H1 (cell line): ENCODE measurements at regions of chr12 and their contacts with region 1.

Region 1: GRCh38 chr12:56266693-56267442 is at the start of gene COQ10A:
- DNase-seq: peak; percentile 51 to 95
- H3K4me3 ChIP-seq: peak within 1 kb of the TSS; percentile 82 to 88 (median 87)
- H3K27ac ChIP-seq: peak within 1 kb of the TSS; percentile 84
- H3K4me1 ChIP-seq: peaks cover 0 to 9% (median 3%) of the 10 kb centered on the region in 4 experiments; a peak in 4 of 7 replicates
- H3K27me3 ChIP-seq: no peaks in the 10 kb centered on the region
- CTCF ChIP-seq: peak; percentile 41 to 71 (median 70)
- EP300 ChIP-seq: no peak
- POLR2A ChIP-seq: peak; percentile 51 to 85
- RAD21 ChIP-seq: peak in 1 of 2 experiments; percentile 1; a peak in 1 of 4 replicates
- total RNA-seq, gene COQ10A: 21.8 and 22.8 TPM in 2 replicates

Region 2: DNA sequence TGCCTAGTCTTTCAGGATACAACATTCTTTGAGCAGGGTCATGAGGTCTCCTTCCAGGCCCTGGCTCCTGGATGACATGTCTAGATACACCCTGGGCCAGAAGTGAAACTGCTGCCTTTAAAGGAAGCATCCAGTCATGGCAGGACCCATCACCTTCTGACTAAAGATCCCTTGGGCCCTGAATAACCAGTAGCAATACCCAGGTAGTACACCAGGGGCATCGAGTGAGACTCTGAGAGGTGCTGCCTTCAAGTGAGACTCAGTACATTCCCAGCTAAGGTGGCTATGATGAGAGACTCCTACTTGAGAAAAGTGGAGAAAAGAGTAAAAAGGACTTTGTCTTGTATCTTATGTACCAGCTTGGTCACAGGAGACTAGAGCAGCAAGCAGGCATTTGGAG is 751.2 kb before region 1 on chr12:
- CTCF ChIA-PET with region 1: no interaction called
- POLR2A ChIA-PET with region 1: no interaction called
- DNase-seq: no peak
- H3K4me3 ChIP-seq: no peak overlapping the region
- H3K27ac ChIP-seq: no peak overlapping the region
- H3K4me1 ChIP-seq: no peaks in the 10 kb centered on the region
- H3K27me3 ChIP-seq: no peaks in the 10 kb centered on the region
- CTCF ChIP-seq: peak in 2 of 3 experiments; percentile 18 to 39; a peak in 2 of 4 replicates
- EP300 ChIP-seq: no peak
- POLR2A ChIP-seq: no peak
- RAD21 ChIP-seq: peak in 1 of 2 experiments; percentile 25; a peak in 3 of 4 replicates

Region 3: DNA sequence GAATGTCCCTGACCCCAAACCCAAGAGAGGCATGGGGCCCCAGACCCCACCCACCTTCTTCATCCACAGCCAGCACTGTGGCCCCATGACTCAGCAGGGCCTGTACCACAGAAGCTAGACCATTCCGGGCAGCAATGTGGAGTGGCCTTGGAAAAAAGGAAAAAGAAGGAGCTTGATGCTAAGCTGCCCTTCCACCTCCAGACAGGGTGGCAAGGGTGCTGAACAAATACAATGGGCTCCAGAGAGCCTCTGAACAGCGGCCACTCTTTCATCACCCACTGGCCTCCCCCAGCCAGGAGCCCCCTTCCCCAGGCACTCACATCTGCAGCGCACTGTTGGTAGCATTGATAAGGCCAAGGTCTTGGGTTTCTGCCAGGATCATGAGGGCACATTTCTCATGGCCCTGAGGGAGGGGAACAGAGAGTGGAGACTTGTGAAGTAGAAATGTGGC is 23.1 kb before region 1 on chr12:
- CTCF ChIA-PET with region 1: interaction called, 5 read pairs
- POLR2A ChIA-PET with region 1: interaction called, 10 read pairs
- DNase-seq: no peak
- H3K4me3 ChIP-seq: no peak overlapping the region
- H3K27ac ChIP-seq: no peak overlapping the region
- H3K4me1 ChIP-seq: no peaks in the 10 kb centered on the region
- H3K27me3 ChIP-seq: no peaks in the 10 kb centered on the region
- CTCF ChIP-seq: no peak
- EP300 ChIP-seq: no peak
- POLR2A ChIP-seq: no peak
- RAD21 ChIP-seq: no peak

Region 4: DNA sequence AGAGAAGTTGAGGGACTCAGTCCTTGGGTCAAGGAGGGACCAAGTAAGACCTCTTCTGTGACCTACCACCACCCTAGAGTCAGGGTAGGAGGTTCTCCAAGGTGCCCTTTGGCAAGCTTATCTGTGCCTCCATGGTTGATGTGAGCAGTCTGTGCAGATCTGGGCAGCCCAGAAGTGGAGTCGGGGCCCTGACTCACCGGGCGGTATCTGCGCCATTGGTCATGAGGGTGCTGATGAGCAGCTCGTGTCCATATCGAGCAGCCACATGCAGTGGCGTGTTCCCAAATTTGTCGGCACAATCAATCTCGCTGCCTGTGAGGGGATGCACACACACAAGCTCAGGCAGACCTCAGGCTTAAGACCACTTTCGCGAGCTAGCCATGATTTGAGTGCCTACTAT is 13.8 kb before region 1 on chr12:
- CTCF ChIA-PET with region 1: interaction called, 26 read pairs
- POLR2A ChIA-PET with region 1: interaction called, 16 read pairs
- DNase-seq: no peak
- H3K4me3 ChIP-seq: no peak overlapping the region
- H3K27ac ChIP-seq: no peak overlapping the region
- H3K4me1 ChIP-seq: peaks cover 8 to 13% (median 11%) of the 10 kb centered on the region in 4 experiments
- H3K27me3 ChIP-seq: no peaks in the 10 kb centered on the region
- CTCF ChIP-seq: no peak
- EP300 ChIP-seq: no peak
- POLR2A ChIP-seq: no peak
- RAD21 ChIP-seq: no peak

Region 5: GRCh38 chr12:56278905-56279304 is 12.0 kb after region 1 on chr12:
- CTCF ChIA-PET with region 1: interaction called, 12 read pairs
- POLR2A ChIA-PET with region 1: interaction called, 7 read pairs
- DNase-seq: no peak
- H3K4me3 ChIP-seq: no peak overlapping the region
- H3K27ac ChIP-seq: no peak overlapping the region
- H3K4me1 ChIP-seq: no peaks in the 10 kb centered on the region
- H3K27me3 ChIP-seq: no peaks in the 10 kb centered on the region
- CTCF ChIP-seq: no peak
- EP300 ChIP-seq: no peak
- POLR2A ChIP-seq: no peak
- RAD21 ChIP-seq: no peak

Region 6: GRCh38 chr12:56286044-56286830 is 19.4 kb after region 1 on chr12:
- CTCF ChIA-PET with region 1: interaction called, 5 read pairs
- POLR2A ChIA-PET with region 1: interaction called, 14 read pairs
- DNase-seq: no peak
- H3K4me3 ChIP-seq: no peak overlapping the region
- H3K27ac ChIP-seq: no peak overlapping the region
- H3K4me1 ChIP-seq: no peaks in the 10 kb centered on the region
- H3K27me3 ChIP-seq: no peaks in the 10 kb centered on the region
- CTCF ChIP-seq: no peak
- EP300 ChIP-seq: no peak
- POLR2A ChIP-seq: no peak
- RAD21 ChIP-seq: no peak

Region 7: GRCh38 chr12:56326126-56326525 is 59.3 kb after region 1 on chr12:
- CTCF ChIA-PET with region 1: no interaction called
- POLR2A ChIA-PET with region 1: no interaction called
- DNase-seq: no peak
- H3K4me3 ChIP-seq: no peak overlapping the region
- H3K27ac ChIP-seq: no peak overlapping the region
- H3K4me1 ChIP-seq: no peaks in the 10 kb centered on the region; a peak in 1 of 7 replicates
- H3K27me3 ChIP-seq: no peaks in the 10 kb centered on the region
- CTCF ChIP-seq: no peak
- EP300 ChIP-seq: no peak
- POLR2A ChIP-seq: no peak
- RAD21 ChIP-seq: no peak